PC-3 (cell line): ENCODE measurements at regions of chr3 and their contacts with region 1.

Region 1: DNA sequence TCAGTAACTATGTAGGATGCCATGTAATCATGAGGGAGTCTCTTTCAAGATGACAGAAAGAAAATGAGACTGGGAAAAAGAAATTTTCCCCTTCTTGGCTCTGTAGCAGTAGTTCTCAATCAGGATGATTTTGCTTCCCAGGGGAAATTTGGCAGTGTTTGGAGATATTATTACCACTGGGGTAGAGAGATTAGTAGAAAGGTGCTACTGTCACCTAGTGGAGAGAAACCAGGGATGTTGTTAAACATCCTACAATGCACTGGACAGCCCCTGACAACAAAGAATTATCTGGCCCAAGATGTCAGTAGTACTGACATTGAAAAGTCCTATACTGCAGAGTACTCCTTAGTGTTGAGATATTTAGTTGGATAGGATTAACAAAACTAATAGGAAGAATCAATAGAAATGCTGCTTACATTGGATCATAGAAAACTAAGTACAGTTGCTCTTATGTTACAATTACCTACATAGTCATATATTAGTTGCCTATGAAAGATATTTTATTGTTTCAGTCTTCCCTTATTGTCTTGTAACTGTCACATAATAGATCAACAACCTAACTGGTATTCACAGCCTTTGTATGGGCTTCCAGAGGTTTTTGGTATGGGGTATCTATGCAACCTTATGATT is 433.3 kb downstream of the RAP2B start:
- DNase-seq: peak; percentile 68
- ATAC-seq: peak; percentile 39
- H3K4me3 ChIP-seq: no peak overlapping the region
- H3K27ac ChIP-seq: no peak overlapping the region
- H3K4me1 ChIP-seq: peaks cover 22% of the 10 kb centered on the region
- H3K27me3 ChIP-seq: no peaks in the 10 kb centered on the region
- CTCF ChIP-seq: peak; percentile 90

Region 2: GRCh38 chr3:153026026-153026425 is 569.3 kb before region 1 on chr3:
- CTCF ChIA-PET with region 1: no interaction called
- POLR2A ChIA-PET with region 1: no interaction called
- intact Hi-C with region 1: loop called (anchors 1 kb)
- DNase-seq: peak; percentile 67
- ATAC-seq: peak; percentile 33
- H3K4me3 ChIP-seq: no peak overlapping the region
- H3K27ac ChIP-seq: no peak overlapping the region
- H3K4me1 ChIP-seq: no peaks in the 10 kb centered on the region
- H3K27me3 ChIP-seq: no peaks in the 10 kb centered on the region
- CTCF ChIP-seq: peak; percentile 91

Region 3: DNA sequence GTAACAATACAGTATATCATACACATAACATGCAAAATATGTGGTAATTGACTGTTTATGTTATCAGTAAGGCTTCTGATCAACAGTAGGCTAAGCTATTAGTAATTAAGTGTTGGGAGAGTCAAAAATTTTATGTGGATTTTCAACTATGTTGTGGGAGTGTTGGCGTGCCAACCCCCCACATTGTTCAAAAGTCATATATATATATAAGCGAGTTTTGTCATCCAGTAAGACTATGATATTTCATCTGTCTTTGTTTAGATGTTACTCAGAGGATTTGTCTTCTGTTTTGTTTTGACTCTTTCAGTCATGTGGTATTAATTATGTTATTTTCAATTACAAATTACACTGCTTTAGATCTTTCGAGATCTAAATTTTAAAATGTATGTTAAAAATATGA is 484.3 kb before region 1 on chr3:
- CTCF ChIA-PET with region 1: no interaction called
- POLR2A ChIA-PET with region 1: no interaction called
- intact Hi-C with region 1: no loop called
- DNase-seq: no peak
- ATAC-seq: no peak
- H3K4me3 ChIP-seq: no peak overlapping the region
- H3K27ac ChIP-seq: no peak overlapping the region
- H3K4me1 ChIP-seq: no peaks in the 10 kb centered on the region
- H3K27me3 ChIP-seq: no peaks in the 10 kb centered on the region
- CTCF ChIP-seq: no peak

Region 4: DNA sequence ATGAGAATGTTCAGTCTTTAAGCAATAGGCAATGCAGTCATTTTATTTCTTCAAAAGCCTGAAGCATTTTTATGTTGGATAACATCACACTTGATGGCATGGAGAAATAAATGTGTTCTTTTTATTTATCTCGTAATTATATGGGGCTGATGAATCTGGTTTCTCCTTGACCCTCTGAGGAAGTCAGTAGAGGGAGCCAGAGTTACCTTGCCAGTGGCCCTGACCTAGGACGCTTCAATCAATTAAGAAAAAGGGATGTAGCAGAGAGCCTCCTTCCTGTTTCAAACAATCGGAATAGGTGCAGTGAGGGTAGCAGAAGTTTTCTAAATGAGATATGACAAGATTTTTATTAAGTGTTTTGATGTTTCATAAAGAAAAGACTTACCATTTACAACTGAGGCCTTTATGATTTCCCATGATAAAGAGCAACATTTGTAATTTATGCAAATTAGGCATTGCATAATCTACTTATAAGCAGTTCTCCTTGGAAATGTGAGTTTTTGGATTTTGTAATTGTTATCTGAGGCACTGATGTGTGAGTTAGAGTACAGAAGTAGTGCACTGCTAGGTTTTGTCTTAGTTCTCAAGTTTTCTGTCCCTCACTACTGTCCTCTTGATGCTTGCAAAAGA is 304.1 kb before region 1 on chr3:
- CTCF ChIA-PET with region 1: interaction called, 4 read pairs
- POLR2A ChIA-PET with region 1: no interaction called
- intact Hi-C with region 1: loop called (anchors 1 kb)
- DNase-seq: peak; percentile 69
- ATAC-seq: peak; percentile 80
- H3K4me3 ChIP-seq: no peak overlapping the region
- H3K27ac ChIP-seq: no peak overlapping the region
- H3K4me1 ChIP-seq: peaks cover 33% of the 10 kb centered on the region
- H3K27me3 ChIP-seq: no peaks in the 10 kb centered on the region
- CTCF ChIP-seq: peak; percentile 85

Region 5: DNA sequence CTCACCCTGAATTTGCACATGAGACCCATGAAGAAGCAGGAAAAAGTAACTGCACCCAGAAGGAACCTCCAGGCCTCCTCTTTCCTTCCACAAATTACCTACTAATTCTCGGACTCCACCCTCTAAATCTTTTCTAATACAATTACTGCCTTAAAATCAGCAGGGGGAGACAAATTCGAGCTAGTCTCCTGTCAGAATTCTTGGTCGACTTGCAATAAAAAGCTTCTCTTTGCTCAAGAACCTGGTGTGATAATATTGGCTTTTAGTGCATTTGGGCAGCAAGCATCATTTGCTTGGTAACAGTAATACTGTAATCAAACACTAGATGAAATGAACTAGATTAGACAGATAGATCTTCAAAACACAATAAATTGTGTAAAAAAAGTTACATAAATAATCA is 151.3 kb before region 1 on chr3:
- CTCF ChIA-PET with region 1: no interaction called
- POLR2A ChIA-PET with region 1: no interaction called
- intact Hi-C with region 1: loop called (anchors 1 kb)
- DNase-seq: peak; percentile 65
- ATAC-seq: no peak
- H3K4me3 ChIP-seq: no peak overlapping the region
- H3K27ac ChIP-seq: no peak overlapping the region
- H3K4me1 ChIP-seq: no peaks in the 10 kb centered on the region
- H3K27me3 ChIP-seq: no peaks in the 10 kb centered on the region
- CTCF ChIP-seq: peak; percentile 72

Region 6: DNA sequence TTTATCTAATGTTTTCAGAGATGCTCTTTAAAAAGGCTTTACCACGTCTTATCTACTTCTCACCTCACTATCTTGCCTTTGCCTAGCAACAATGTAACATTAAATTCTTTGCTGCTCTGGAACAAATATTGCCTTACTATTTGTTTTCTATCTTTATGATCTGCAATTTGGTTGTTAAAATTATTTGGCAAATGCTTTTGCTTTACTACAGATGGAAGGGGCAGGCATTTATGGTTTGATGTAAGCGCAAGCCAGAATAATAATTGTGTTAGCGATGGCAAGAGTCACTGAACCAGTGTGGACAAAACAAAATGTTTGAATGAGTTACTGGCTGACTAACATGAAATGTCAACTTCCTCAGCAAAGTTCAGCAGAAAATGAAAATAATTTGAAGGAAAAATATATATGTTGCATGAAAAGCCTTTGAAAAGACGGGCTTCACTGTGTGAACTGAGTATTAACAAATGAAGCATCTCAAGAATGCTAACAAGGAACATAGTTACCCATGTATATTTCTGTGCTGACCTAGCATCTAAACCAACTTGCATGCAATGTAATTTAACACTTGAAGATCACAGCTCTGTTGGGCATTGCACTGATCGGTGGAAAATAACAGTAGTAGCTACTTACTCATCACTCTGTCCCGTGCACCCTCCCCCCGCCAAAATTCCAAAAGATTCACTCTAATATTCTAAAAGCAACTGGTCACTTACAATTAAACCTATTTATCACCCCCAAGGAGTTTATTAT is 71.9 kb after region 1 on chr3:
- CTCF ChIA-PET with region 1: no interaction called
- POLR2A ChIA-PET with region 1: no interaction called
- intact Hi-C with region 1: loop called (anchors 1 kb)
- DNase-seq: peak; percentile 39
- ATAC-seq: peak; percentile 92
- H3K4me3 ChIP-seq: peak overlapping the region; percentile 17; the same call in 1 of the 2 replicates
- H3K27ac ChIP-seq: 0 out of 2 replicates have a peak overlapping the region, but pooled peaks have one; percentile 7
- H3K4me1 ChIP-seq: peaks cover 11% of the 10 kb centered on the region
- H3K27me3 ChIP-seq: no peaks in the 10 kb centered on the region
- CTCF ChIP-seq: no peak

Region 7: DNA sequence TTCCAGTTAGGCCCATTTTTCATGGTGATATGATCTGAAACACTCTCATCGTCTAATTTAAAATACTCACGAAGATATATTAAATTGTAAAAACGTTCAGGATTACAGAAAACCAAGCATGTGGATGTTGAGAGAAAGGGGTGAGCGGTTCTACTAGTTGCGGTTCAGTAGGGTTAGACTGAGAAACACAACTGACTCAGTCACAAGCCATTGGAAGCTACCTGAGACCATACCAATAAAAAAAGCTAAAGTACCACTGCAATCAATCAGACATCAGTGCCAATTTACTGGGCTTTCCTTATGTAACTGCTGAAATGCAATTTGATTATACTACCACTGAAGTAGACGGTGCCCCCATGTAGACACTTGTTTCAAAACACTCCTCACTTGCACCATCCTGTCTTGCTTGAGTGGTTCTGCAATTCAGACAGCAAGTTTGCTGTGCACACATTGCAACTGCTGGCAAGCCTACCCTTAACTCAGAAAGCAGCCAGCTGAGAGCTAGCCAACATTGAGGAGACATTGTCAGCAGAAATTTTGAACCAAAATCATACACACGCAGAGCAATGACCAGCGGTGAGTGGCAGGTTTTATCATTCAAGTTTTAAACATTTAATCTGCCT is 157.2 kb after region 1 on chr3:
- CTCF ChIA-PET with region 1: no interaction called
- POLR2A ChIA-PET with region 1: no interaction called
- intact Hi-C with region 1: loop called (anchors 1 kb)
- DNase-seq: peak; percentile 66
- ATAC-seq: peak; percentile 56
- H3K4me3 ChIP-seq: peak overlapping the region; percentile 55
- H3K27ac ChIP-seq: peak overlapping the region; percentile 92
- H3K4me1 ChIP-seq: peaks cover 37% of the 10 kb centered on the region
- H3K27me3 ChIP-seq: no peaks in the 10 kb centered on the region
- CTCF ChIP-seq: no peak

Region 8: GRCh38 chr3:153927107-153927506 is 331.8 kb after region 1 on chr3:
- CTCF ChIA-PET with region 1: interaction called, 3 read pairs
- POLR2A ChIA-PET with region 1: no interaction called
- intact Hi-C with region 1: loop called (anchors 2 kb)
- DNase-seq: peak; percentile 80
- ATAC-seq: peak; percentile 93
- H3K4me3 ChIP-seq: 0 out of 2 replicates have a peak overlapping the region, but pooled peaks have one; percentile 5
- H3K27ac ChIP-seq: no peak overlapping the region
- H3K4me1 ChIP-seq: peaks cover 6% of the 10 kb centered on the region
- H3K27me3 ChIP-seq: no peaks in the 10 kb centered on the region
- CTCF ChIP-seq: peak; percentile 65